Adrenal gland (tissue), 19 donors: ENCODE measurements at regions of chr11 and their contacts with region 1.

Region 1: GRCh38 chr11:61532139-61533038 is 23.8 kb downstream of the LRRC10B start:
- DNase-seq: peak in 6 of 7 donors; percentile 38 to 66 (median 54)
- H3K4me3 ChIP-seq: no peak overlapping the region
- H3K27ac ChIP-seq: no peak overlapping the region
- H3K4me1 ChIP-seq: peaks cover 0 to 7% of the 10 kb centered on the region in 2 donors
- H3K27me3 ChIP-seq: no peaks in the 10 kb centered on the region
- CTCF ChIP-seq: peak; percentile 34 to 65 (median 54)
- POLR2A ChIP-seq: no peak

Region 2: GRCh38 chr11:61627567-61628445 is 95.4 kb after region 1 on chr11:
- intact Hi-C with region 1: loop called in 1 of 2 experiments (anchors 10 kb)
- DNase-seq: peak; percentile 58 to 86 (median 68)
- H3K4me3 ChIP-seq: no peak overlapping the region
- H3K27ac ChIP-seq: no peak overlapping the region
- H3K4me1 ChIP-seq: no peaks in the 10 kb centered on the region
- H3K27me3 ChIP-seq: no peaks in the 10 kb centered on the region
- CTCF ChIP-seq: peak; percentile 44 to 72 (median 65)
- POLR2A ChIP-seq: no peak